Right ventricle myocardium superior (tissue), 1 donor: ENCODE measurements at regions of chr1 and their contacts with region 1.

Region 1: GRCh38 chr1:227946624-227947385 is 927 bp downstream of the WNT9A start:
- DNase-seq: peak; percentile 84
- ATAC-seq: peak; percentile 88

Region 2: GRCh38 chr1:227465256-227465655 is 481.5 kb before region 1 on chr1:
- intact Hi-C with region 1: no loop called
- DNase-seq: no peak
- ATAC-seq: no peak

Region 3: DNA sequence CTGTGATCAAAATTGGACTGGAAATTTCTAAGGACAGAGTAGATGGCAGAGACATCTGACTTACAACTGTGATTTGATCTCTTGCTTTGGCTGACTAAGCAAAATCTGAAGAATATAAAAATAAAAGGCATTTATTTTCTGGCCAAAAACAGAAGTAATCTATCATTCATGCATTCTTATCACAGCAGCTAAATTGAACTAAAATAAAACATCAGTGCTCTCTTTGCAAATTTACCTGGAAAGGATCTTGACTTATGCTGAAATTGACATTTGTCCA is 464.8 kb before region 1 on chr1:
- intact Hi-C with region 1: loop called (anchors 5 kb)
- DNase-seq: no peak
- ATAC-seq: no peak

Region 4: GRCh38 chr1:227762233-227762911 is 184.4 kb before region 1 on chr1:
- intact Hi-C with region 1: loop called (anchors 2 kb)
- DNase-seq: peak; percentile 92
- ATAC-seq: peak; percentile 87

Region 5: GRCh38 chr1:228037401-228038386 is 90.9 kb after region 1 on chr1:
- intact Hi-C with region 1: no loop called
- DNase-seq: no peak
- ATAC-seq: no peak